CD4-positive, alpha-beta memory T cell (primary cell): ENCODE measurements at regions of chr16 and their contacts with region 1.

Region 1: DNA sequence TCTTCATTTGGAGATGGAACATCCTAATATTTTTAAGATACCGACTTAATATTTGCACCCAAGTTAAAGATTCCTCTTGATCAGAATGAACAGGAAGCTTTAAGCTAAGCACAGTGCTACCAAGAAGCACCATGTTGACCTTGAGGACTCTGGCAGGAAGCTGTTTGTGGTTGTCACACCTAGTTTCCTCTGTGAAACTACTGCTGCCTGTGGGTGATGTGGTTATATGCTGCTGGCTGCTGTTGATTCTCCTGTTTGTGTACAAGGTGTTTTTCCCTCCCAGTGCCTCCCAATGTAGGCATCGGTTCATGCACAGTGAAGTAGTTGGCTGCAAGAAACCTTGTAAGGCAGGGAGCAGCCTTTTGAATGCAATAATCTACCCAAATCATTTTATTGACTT is 23.4 kb downstream of the RBL2 start:
- DNase-seq: peak; percentile 85 to 93 (median 89)
- H3K4me3 ChIP-seq: peak overlapping the region; percentile 34 to 38
- H3K4me3 Mint-ChIP-seq: peak overlapping the region; percentile 78 to 95 (median 88)
- H3K27ac ChIP-seq: peak overlapping the region; percentile 42
- H3K27ac Mint-ChIP-seq: peak overlapping the region; percentile 88 to 99 (median 94)
- H3K4me1 ChIP-seq: peaks cover 92% of the 10 kb centered on the region
- H3K4me1 Mint-ChIP-seq: peaks cover 61 to 96% (median 80%) of the 10 kb centered on the region in 4 donors
- H3K27me3 ChIP-seq: no peaks in the 10 kb centered on the region
- H3K27me3 Mint-ChIP-seq: no peaks in the 10 kb centered on the region

Region 2: GRCh38 chr16:53304334-53304733 is 153.3 kb before region 1 on chr16:
- CTCF ChIA-PET with region 1: no interaction called
- POLR2A ChIA-PET with region 1: interaction called, 4 read pairs
- intact Hi-C with region 1: loop called (anchors 5 kb)
- DNase-seq: no peak
- H3K4me3 ChIP-seq: no peak overlapping the region
- H3K4me3 Mint-ChIP-seq: no peak overlapping the region
- H3K27ac ChIP-seq: no peak overlapping the region
- H3K27ac Mint-ChIP-seq: no peak overlapping the region
- H3K4me1 ChIP-seq: no peaks in the 10 kb centered on the region
- H3K4me1 Mint-ChIP-seq: no peaks in the 10 kb centered on the region
- H3K27me3 ChIP-seq: no peaks in the 10 kb centered on the region
- H3K27me3 Mint-ChIP-seq: no peaks in the 10 kb centered on the region

Region 3: GRCh38 chr16:53429221-53429943 is 28.3 kb before region 1 on chr16:
- CTCF ChIA-PET with region 1: interaction called, 57 read pairs
- POLR2A ChIA-PET with region 1: interaction called, 364 read pairs
- intact Hi-C with region 1: no loop called
- DNase-seq: no peak
- H3K4me3 ChIP-seq: no peak overlapping the region
- H3K4me3 Mint-ChIP-seq: no peak overlapping the region
- H3K27ac ChIP-seq: no peak overlapping the region
- H3K27ac Mint-ChIP-seq: no peak overlapping the region
- H3K4me1 ChIP-seq: peaks cover 7% of the 10 kb centered on the region
- H3K4me1 Mint-ChIP-seq: peaks cover 2 to 9% (median 8%) of the 10 kb centered on the region in 4 donors
- H3K27me3 ChIP-seq: no peaks in the 10 kb centered on the region
- H3K27me3 Mint-ChIP-seq: no peaks in the 10 kb centered on the region

Region 4: DNA sequence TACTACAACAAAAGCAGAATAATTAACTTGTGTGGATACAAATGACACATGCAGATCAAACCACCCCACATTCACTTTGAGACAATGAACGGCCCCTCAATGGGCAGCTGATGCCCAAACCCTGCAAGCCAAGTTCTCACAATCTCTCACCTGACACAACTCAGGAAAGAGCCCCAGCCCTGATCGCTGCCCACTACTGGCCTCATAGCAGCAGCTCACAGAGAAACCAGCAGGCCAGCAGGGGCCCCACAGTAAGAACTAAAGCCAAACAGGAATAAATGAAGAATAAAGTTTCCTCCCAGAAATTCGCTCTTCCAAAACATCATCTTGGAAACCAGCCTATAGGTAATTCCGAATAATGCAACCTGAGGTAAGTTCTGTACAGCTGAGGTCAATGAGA is 37.7 kb after region 1 on chr16:
- CTCF ChIA-PET with region 1: interaction called, 4 read pairs
- POLR2A ChIA-PET with region 1: interaction called, 276 read pairs
- intact Hi-C with region 1: no loop called
- DNase-seq: no peak
- H3K4me3 ChIP-seq: no peak overlapping the region
- H3K4me3 Mint-ChIP-seq: peak overlapping the region in 1 of 8 donors; percentile 25
- H3K27ac ChIP-seq: no peak overlapping the region
- H3K27ac Mint-ChIP-seq: peak overlapping the region in 6 of 7 donors; percentile 45 to 76 (median 74)
- H3K4me1 ChIP-seq: peaks cover 48% of the 10 kb centered on the region
- H3K4me1 Mint-ChIP-seq: peaks cover 31 to 76% (median 56%) of the 10 kb centered on the region in 4 donors
- H3K27me3 ChIP-seq: no peaks in the 10 kb centered on the region
- H3K27me3 Mint-ChIP-seq: no peaks in the 10 kb centered on the region

Region 5: GRCh38 chr16:53509906-53510703 is 52.4 kb after region 1 on chr16:
- CTCF ChIA-PET with region 1: interaction called, 5 read pairs
- POLR2A ChIA-PET with region 1: interaction called, 276 read pairs
- intact Hi-C with region 1: loop called (anchors 2 kb)
- DNase-seq: peak in 4 of 5 donors; percentile 55 to 60 (median 58)
- H3K4me3 ChIP-seq: peak overlapping the region in 1 of 2 donors; percentile 2
- H3K4me3 Mint-ChIP-seq: peak overlapping the region in 7 of 8 donors; percentile 39 to 75 (median 62)
- H3K27ac ChIP-seq: no peak overlapping the region
- H3K27ac Mint-ChIP-seq: peak overlapping the region in 6 of 7 donors; percentile 17 to 79 (median 60)
- H3K4me1 ChIP-seq: peaks cover 26% of the 10 kb centered on the region
- H3K4me1 Mint-ChIP-seq: peaks cover 26 to 53% (median 39%) of the 10 kb centered on the region in 4 donors
- H3K27me3 ChIP-seq: no peaks in the 10 kb centered on the region
- H3K27me3 Mint-ChIP-seq: no peaks in the 10 kb centered on the region

Region 6: GRCh38 chr16:53642094-53642493 is 184.4 kb after region 1 on chr16:
- CTCF ChIA-PET with region 1: no interaction called
- POLR2A ChIA-PET with region 1: no interaction called
- intact Hi-C with region 1: no loop called
- DNase-seq: no peak
- H3K4me3 ChIP-seq: no peak overlapping the region
- H3K4me3 Mint-ChIP-seq: no peak overlapping the region
- H3K27ac ChIP-seq: no peak overlapping the region
- H3K27ac Mint-ChIP-seq: no peak overlapping the region
- H3K4me1 ChIP-seq: no peaks in the 10 kb centered on the region
- H3K4me1 Mint-ChIP-seq: no peaks in the 10 kb centered on the region
- H3K27me3 ChIP-seq: no peaks in the 10 kb centered on the region
- H3K27me3 Mint-ChIP-seq: no peaks in the 10 kb centered on the region